Adrenal gland (tissue), 19 donors: ENCODE measurements at regions of chr11 and their contacts with region 1.

Region 1: DNA sequence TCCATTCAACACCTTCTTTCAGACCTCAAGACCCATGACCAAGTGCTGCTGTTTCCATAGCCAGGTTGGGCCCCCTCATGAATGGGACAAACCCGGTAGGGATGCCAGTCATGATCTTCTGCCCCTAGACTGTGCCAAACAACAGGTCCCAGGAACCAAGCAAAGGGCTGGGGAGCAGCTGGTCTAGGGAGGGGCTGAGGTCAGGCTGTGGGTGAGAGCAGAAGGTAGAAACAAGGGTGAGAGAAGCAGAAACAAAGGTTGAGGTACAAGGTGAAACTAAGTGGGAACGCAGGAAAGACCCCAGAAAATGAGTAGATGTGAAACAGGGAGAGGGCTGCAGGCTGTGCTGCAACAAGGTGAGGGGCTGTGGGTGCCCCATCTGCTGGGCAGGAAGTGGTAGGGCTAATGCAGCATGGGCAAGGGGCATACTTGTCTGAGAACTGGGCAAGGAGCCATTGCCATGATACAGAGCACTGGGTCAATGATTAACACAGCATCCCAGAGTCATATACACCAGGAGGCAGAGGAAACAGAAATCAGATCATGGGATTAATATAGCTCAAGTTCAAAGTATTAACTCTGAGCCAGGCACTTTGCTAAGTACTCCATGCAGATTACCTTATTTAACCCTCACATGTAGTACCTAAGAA is 45.9 kb downstream of the SLC1A2 start:
- DNase-seq: no peak
- H3K4me3 ChIP-seq: no peak overlapping the region
- H3K27ac ChIP-seq: no peak overlapping the region
- H3K4me1 ChIP-seq: peaks cover under 1 to 2% of the 10 kb centered on the region in 2 donors
- H3K27me3 ChIP-seq: no peaks in the 10 kb centered on the region
- CTCF ChIP-seq: no peak
- POLR2A ChIP-seq: no peak

Region 2: GRCh38 chr11:35260342-35260985 is 112.9 kb before region 1 on chr11:
- intact Hi-C with region 1: loop called in 1 of 2 experiments (anchors 10 kb)
- DNase-seq: no peak
- H3K4me3 ChIP-seq: no peak overlapping the region
- H3K27ac ChIP-seq: no peak overlapping the region
- H3K4me1 ChIP-seq: no peaks in the 10 kb centered on the region
- H3K27me3 ChIP-seq: no peaks in the 10 kb centered on the region
- CTCF ChIP-seq: no peak
- POLR2A ChIP-seq: no peak